CD4-positive, alpha-beta memory T cell (primary cell): ENCODE measurements at regions of chr9 and their contacts with region 1.

Region 1: DNA sequence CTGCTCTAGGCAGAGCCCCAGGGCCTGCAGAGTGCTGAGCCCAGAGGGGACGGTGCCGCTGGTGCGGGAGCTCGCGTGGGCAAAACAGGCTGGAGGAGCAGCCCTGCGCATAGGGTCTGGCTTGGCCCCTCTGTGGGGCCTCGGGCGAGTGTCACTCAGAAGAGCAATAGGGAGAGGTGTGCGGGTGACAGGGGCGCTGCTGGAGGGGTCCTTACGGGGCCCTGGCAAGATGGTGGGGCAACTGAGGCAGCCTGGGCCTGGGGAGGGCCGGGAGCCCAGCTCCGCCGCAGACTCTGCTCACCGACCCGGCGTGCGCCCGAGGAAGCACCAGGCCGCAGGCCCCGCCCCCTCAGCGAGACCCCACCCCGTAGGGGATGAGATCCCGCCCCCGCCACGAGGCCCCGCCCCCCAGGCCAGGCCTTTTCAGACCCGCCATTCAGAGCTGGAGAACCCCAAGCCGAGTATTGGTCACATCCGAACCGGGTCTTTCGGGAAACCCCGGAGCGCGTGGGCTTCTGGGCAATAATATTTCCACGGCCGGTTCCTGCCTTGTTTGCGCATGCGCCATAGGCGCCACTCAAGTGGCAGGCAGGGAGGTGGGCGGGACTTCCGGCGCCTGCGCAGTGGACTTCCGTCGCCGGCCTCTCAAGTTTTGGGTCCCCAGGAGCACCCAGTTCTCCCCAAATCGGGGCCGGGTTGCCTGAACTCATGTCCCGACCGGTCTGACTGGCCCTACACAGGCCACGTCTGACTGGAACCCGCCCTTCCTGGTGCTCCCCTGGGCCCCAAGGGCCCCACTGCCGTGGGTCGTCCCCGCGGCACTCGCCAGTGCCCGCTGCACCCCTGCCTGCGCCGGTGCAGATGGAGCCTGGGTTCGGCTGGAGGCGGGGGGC is 1.3 kb upstream of the RNF208 start:
- DNase-seq: peak; percentile 96 to 99 (median 99)
- H3K4me3 ChIP-seq: peak overlapping the region; percentile 66 to 85
- H3K4me3 Mint-ChIP-seq: peak overlapping the region; percentile 62 to 84 (median 77)
- H3K27ac ChIP-seq: peak overlapping the region; percentile 83
- H3K27ac Mint-ChIP-seq: peak overlapping the region; percentile 42 to 87 (median 68)
- H3K4me1 ChIP-seq: peaks cover 18% of the 10 kb centered on the region
- H3K4me1 Mint-ChIP-seq: peaks cover 2 to 19% (median 6%) of the 10 kb centered on the region in 4 donors
- H3K27me3 ChIP-seq: no peaks in the 10 kb centered on the region
- H3K27me3 Mint-ChIP-seq: peaks cover 2 to 3% of the 10 kb centered on the region in 2 donors

Region 2: GRCh38 chr9:136790927-136791641 is 432.2 kb before region 1 on chr9 and contains the start of gene TMEM141:
- CTCF ChIA-PET with region 1: no interaction called
- POLR2A ChIA-PET with region 1: interaction called, 8 read pairs
- intact Hi-C with region 1: loop called (anchors 1 kb)
- DNase-seq: peak; percentile 99 to 100 (median 99)
- H3K4me3 ChIP-seq: peak within 1 kb of the TSS; percentile 61 to 86
- H3K4me3 Mint-ChIP-seq: peak within 1 kb of the TSS; percentile 81 to 88 (median 85)
- H3K27ac ChIP-seq: peak within 1 kb of the TSS; percentile 93
- H3K27ac Mint-ChIP-seq: peak within 1 kb of the TSS; percentile 91 to 98 (median 95)
- H3K4me1 ChIP-seq: peaks cover 31% of the 10 kb centered on the region
- H3K4me1 Mint-ChIP-seq: peaks cover 8 to 42% (median 24%) of the 10 kb centered on the region in 4 donors
- H3K27me3 ChIP-seq: no peaks in the 10 kb centered on the region
- H3K27me3 Mint-ChIP-seq: no peaks in the 10 kb centered on the region
- total RNA-seq, gene TMEM141: 51.1 to 53.4 TPM

Region 3: GRCh38 chr9:137095664-137096517 is 127.4 kb before region 1 on chr9:
- CTCF ChIA-PET with region 1: interaction called, 6 read pairs
- POLR2A ChIA-PET with region 1: interaction called, 19 read pairs
- intact Hi-C with region 1: loop called (anchors 1 kb)
- DNase-seq: peak; percentile 87 to 94 (median 90)
- H3K4me3 ChIP-seq: peak overlapping the region; percentile 54 to 65
- H3K4me3 Mint-ChIP-seq: peak overlapping the region; percentile 83 to 90 (median 88)
- H3K27ac ChIP-seq: peak overlapping the region; percentile 80
- H3K27ac Mint-ChIP-seq: peak overlapping the region; percentile 88 to 97 (median 96)
- H3K4me1 ChIP-seq: peaks cover 25% of the 10 kb centered on the region
- H3K4me1 Mint-ChIP-seq: peaks cover 14 to 31% (median 18%) of the 10 kb centered on the region in 4 donors
- H3K27me3 ChIP-seq: no peaks in the 10 kb centered on the region
- H3K27me3 Mint-ChIP-seq: no peaks in the 10 kb centered on the region

Region 4: GRCh38 chr9:137123468-137123837 is 99.9 kb before region 1 on chr9:
- CTCF ChIA-PET with region 1: interaction called, 33 read pairs
- POLR2A ChIA-PET with region 1: interaction called, 34 read pairs
- intact Hi-C with region 1: loop called (anchors 1 kb)
- DNase-seq: no peak
- H3K4me3 ChIP-seq: no peak overlapping the region
- H3K4me3 Mint-ChIP-seq: no peak overlapping the region
- H3K27ac ChIP-seq: no peak overlapping the region
- H3K27ac Mint-ChIP-seq: no peak overlapping the region
- H3K4me1 ChIP-seq: peaks cover 20% of the 10 kb centered on the region
- H3K4me1 Mint-ChIP-seq: peaks cover 20 to 38% (median 25%) of the 10 kb centered on the region in 4 donors
- H3K27me3 ChIP-seq: no peaks in the 10 kb centered on the region
- H3K27me3 Mint-ChIP-seq: no peaks in the 10 kb centered on the region

Region 5: DNA sequence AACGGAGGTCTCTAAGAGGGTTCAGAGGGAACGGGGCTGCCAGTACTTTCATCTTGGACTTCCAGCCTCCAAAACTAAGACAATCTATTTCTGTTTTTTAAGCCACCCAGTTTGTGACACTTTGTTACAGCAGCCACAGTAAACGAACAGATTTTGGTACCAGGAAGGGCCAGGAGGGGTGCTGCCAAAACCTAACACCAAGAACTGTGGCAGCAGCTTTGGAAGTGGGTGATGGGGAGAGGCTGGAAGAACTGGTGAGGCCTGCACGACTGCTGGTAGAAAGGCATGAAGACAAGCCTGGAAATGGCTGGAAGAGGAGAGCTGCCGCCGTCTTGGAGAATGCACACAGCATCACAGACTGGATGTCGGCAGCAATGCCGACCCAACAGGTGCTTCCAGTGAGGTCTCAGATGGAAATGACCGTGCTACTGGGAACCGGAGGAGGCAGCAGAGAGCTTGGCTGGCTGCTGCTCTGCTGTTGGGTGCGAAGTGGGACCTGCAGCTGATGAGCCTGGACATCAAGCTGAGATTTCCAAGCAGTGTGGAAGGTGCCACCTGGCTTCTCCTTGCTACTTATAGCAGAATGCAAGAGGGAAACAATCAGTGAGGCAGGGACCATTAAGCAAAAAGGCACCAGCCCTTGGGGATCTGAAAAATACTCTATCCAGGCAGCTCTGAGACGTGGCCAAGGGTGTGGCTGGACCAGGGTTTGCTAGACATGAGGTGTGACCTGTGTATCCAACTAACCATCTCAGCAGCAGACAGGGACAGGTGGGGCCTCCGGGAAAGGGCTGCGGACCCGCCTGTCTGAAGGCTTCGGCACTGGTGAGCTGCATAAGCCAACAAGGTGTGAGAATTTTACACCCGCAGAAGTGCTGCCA is 46.8 kb before region 1 on chr9:
- CTCF ChIA-PET with region 1: interaction called, 4 read pairs
- POLR2A ChIA-PET with region 1: no interaction called
- intact Hi-C with region 1: loop called (anchors 1 kb)
- DNase-seq: peak in 3 of 5 donors; percentile 21 to 31 (median 23)
- H3K4me3 ChIP-seq: no peak overlapping the region
- H3K4me3 Mint-ChIP-seq: peak overlapping the region in 1 of 8 donors; percentile 25
- H3K27ac ChIP-seq: no peak overlapping the region
- H3K27ac Mint-ChIP-seq: peak overlapping the region in 2 of 7 donors; percentile 42 to 59
- H3K4me1 ChIP-seq: no peaks in the 10 kb centered on the region
- H3K4me1 Mint-ChIP-seq: peaks cover 2 to 13% (median 7%) of the 10 kb centered on the region in 4 donors
- H3K27me3 ChIP-seq: peaks cover 4% of the 10 kb centered on the region
- H3K27me3 Mint-ChIP-seq: peaks cover 0 to under 1% of the 10 kb centered on the region in 2 donors

Region 6: DNA sequence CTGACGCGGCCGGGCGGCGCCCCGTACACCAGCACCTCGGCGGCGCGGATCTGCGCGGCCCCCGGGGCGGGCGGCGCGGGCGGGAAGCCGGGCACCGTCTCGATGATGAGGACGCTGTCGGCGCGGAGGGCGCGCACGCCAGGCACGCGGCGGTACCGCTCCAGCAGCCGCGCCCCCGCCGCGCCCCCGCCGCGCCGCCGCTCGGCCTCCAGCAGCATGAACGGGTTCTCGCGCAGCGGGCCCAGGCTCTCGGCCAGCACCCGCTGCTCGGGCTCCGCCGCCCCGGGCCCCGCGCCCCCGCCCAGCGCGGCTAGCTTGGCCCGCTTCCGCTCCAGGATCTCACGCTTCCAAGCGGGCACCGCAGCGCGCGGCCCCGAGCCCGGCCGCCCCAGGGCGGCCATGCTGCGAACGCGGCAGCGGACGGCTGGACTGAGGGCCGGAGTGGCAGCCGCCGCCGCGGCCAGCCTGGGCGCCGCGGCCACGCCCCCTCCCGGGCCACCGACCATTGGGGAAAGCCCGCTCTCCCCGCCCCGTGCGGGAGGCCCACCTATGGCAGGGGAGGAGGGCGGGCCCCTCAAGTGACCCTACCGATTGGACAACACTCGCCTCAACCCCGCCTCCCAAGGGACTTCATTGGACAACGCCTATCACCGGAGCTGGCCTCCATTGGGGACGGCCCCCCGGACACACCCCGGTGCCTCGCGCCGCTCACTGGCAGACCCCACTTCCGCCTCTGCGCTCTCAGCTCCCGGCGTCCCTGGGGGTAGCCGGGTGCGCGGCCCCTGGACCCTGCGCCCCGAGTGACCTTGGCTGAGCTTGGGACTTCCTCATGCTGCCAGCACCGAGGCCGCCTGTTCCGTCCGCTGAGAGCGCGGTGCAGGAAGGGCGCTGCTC is 22.8 kb before region 1 on chr9 and contains the start of gene TPRN:
- CTCF ChIA-PET with region 1: interaction called, 5 read pairs
- POLR2A ChIA-PET with region 1: interaction called, 54 read pairs
- intact Hi-C with region 1: loop called (anchors 1 kb)
- DNase-seq: peak; percentile 97 to 99 (median 98)
- H3K4me3 ChIP-seq: peak within 1 kb of the TSS; percentile 52 to 77
- H3K4me3 Mint-ChIP-seq: peak within 1 kb of the TSS; percentile 81 to 93 (median 82)
- H3K27ac ChIP-seq: peak within 1 kb of the TSS; percentile 72
- H3K27ac Mint-ChIP-seq: peak within 1 kb of the TSS; percentile 62 to 93 (median 83)
- H3K4me1 ChIP-seq: peaks cover 40% of the 10 kb centered on the region
- H3K4me1 Mint-ChIP-seq: peaks cover 9 to 35% (median 25%) of the 10 kb centered on the region in 4 donors
- H3K27me3 ChIP-seq: no peaks in the 10 kb centered on the region
- H3K27me3 Mint-ChIP-seq: no peaks in the 10 kb centered on the region
- total RNA-seq, gene TPRN: 8.5 to 8.6 TPM

Region 7: GRCh38 chr9:137396227-137396626 is 172.9 kb after region 1 on chr9:
- CTCF ChIA-PET with region 1: no interaction called
- POLR2A ChIA-PET with region 1: no interaction called
- intact Hi-C with region 1: no loop called
- DNase-seq: no peak
- H3K4me3 ChIP-seq: no peak overlapping the region
- H3K4me3 Mint-ChIP-seq: no peak overlapping the region
- H3K27ac ChIP-seq: no peak overlapping the region
- H3K27ac Mint-ChIP-seq: no peak overlapping the region
- H3K4me1 ChIP-seq: no peaks in the 10 kb centered on the region
- H3K4me1 Mint-ChIP-seq: peaks cover 0 to 13% (median 4%) of the 10 kb centered on the region in 4 donors
- H3K27me3 ChIP-seq: no peaks in the 10 kb centered on the region
- H3K27me3 Mint-ChIP-seq: no peaks in the 10 kb centered on the region

Region 8: GRCh38 chr9:137416563-137417151 is 193.3 kb after region 1 on chr9:
- CTCF ChIA-PET with region 1: no interaction called
- POLR2A ChIA-PET with region 1: no interaction called
- intact Hi-C with region 1: no loop called
- DNase-seq: peak in 1 of 5 donors; percentile 9
- H3K4me3 ChIP-seq: no peak overlapping the region
- H3K4me3 Mint-ChIP-seq: peak overlapping the region in 2 of 8 donors; percentile 15 to 23
- H3K27ac ChIP-seq: no peak overlapping the region
- H3K27ac Mint-ChIP-seq: no peak overlapping the region
- H3K4me1 ChIP-seq: peaks cover 11% of the 10 kb centered on the region
- H3K4me1 Mint-ChIP-seq: peaks cover 2 to 11% (median 5%) of the 10 kb centered on the region in 4 donors
- H3K27me3 ChIP-seq: no peaks in the 10 kb centered on the region
- H3K27me3 Mint-ChIP-seq: no peaks in the 10 kb centered on the region